Activated CD8-positive, alpha-beta memory T cell treated with anti-CD3 and anti-CD28 coated beads, Interleukin-2, amount 10 ng/mL, durations not matched to agents 7 days and 5 days (primary cell): ENCODE measurements at regions of chr17 and their contacts with region 1.

Region 1: DNA sequence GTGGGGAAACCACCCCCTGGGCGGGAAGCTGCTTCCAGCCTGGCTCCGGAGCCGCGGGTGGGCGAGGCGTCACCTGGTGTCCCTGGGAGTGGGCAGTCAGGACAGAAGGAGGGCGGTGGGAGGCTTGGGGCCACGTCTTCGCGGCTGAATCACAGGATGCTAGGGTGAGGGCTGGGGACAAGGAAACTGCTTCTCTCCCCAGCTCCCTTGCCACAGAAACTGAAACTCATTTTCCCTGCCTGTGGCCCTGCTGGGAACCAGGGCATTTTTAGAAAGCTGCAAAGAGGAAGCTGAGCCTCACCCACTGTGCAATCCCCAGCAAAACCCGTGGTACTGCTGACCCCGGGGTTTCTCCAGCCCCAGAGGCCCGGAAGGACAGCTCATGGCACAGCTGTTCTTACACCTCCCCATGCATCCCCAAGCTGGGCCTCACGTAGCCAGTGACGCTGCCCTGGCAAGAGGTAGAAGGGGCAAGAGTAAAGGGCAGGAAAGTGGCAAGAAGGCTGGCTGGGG is 8.2 kb downstream of the RHBDF2 start:
- DNase-seq: peak; percentile 75
- ATAC-seq: peak; percentile 63
- H3K4me3 Mint-ChIP-seq: peak overlapping the region; percentile 73
- H3K27ac Mint-ChIP-seq: peak overlapping the region; percentile 98
- H3K4me1 Mint-ChIP-seq: peaks cover 57% of the 10 kb centered on the region
- H3K27me3 Mint-ChIP-seq: no peaks in the 10 kb centered on the region

Region 2: GRCh38 chr17:76147211-76148014 is 345.6 kb before region 1 on chr17:
- CTCF ChIA-PET with region 1: no interaction called
- DNase-seq: no peak
- ATAC-seq: no peak
- H3K4me3 Mint-ChIP-seq: no peak overlapping the region
- H3K27ac Mint-ChIP-seq: peak overlapping the region; percentile 92
- H3K4me1 Mint-ChIP-seq: peaks cover 61% of the 10 kb centered on the region
- H3K27me3 Mint-ChIP-seq: no peaks in the 10 kb centered on the region

Region 3: GRCh38 chr17:76467366-76467765 is 25.7 kb before region 1 on chr17 and contains the start of gene AANAT:
- CTCF ChIA-PET with region 1: interaction called, 192 read pairs
- DNase-seq: no peak
- ATAC-seq: no peak
- H3K4me3 Mint-ChIP-seq: no peak within 1 kb of the TSS
- H3K27ac Mint-ChIP-seq: no peak within 1 kb of the TSS
- H3K4me1 Mint-ChIP-seq: peaks cover 4% of the 10 kb centered on the region
- H3K27me3 Mint-ChIP-seq: peaks cover 5% of the 10 kb centered on the region
- total RNA-seq, gene AANAT: not detected

Region 4: GRCh38 chr17:76474894-76475293 is 18.2 kb before region 1 on chr17:
- CTCF ChIA-PET with region 1: interaction called, 192 read pairs
- DNase-seq: no peak
- ATAC-seq: no peak
- H3K4me3 Mint-ChIP-seq: no peak overlapping the region
- H3K27ac Mint-ChIP-seq: no peak overlapping the region
- H3K4me1 Mint-ChIP-seq: no peaks in the 10 kb centered on the region
- H3K27me3 Mint-ChIP-seq: no peaks in the 10 kb centered on the region

Region 5: GRCh38 chr17:76681222-76682137 is 188.4 kb after region 1 on chr17:
- CTCF ChIA-PET with region 1: no interaction called
- DNase-seq: peak; percentile 82
- ATAC-seq: peak; percentile 70
- H3K4me3 Mint-ChIP-seq: no peak overlapping the region
- H3K27ac Mint-ChIP-seq: no peak overlapping the region
- H3K4me1 Mint-ChIP-seq: peaks cover 12% of the 10 kb centered on the region
- H3K27me3 Mint-ChIP-seq: no peaks in the 10 kb centered on the region